Dorsolateral prefrontal cortex (tissue), 120 donors: ENCODE measurements at regions of chr12 and their contacts with region 1.

Region 1: GRCh38 chr12:53195516-53196420 is 11.3 kb downstream of the ITGB7 start:
- DNase-seq: no peak
- H3K4me3 ChIP-seq: no peak overlapping the region
- H3K27ac ChIP-seq: no peak overlapping the region
- H3K27me3 ChIP-seq: peaks cover 0 to 11% (median 0%) of the 10 kb centered on the region in 45 donors
- CTCF ChIP-seq: no peak

Region 2: DNA sequence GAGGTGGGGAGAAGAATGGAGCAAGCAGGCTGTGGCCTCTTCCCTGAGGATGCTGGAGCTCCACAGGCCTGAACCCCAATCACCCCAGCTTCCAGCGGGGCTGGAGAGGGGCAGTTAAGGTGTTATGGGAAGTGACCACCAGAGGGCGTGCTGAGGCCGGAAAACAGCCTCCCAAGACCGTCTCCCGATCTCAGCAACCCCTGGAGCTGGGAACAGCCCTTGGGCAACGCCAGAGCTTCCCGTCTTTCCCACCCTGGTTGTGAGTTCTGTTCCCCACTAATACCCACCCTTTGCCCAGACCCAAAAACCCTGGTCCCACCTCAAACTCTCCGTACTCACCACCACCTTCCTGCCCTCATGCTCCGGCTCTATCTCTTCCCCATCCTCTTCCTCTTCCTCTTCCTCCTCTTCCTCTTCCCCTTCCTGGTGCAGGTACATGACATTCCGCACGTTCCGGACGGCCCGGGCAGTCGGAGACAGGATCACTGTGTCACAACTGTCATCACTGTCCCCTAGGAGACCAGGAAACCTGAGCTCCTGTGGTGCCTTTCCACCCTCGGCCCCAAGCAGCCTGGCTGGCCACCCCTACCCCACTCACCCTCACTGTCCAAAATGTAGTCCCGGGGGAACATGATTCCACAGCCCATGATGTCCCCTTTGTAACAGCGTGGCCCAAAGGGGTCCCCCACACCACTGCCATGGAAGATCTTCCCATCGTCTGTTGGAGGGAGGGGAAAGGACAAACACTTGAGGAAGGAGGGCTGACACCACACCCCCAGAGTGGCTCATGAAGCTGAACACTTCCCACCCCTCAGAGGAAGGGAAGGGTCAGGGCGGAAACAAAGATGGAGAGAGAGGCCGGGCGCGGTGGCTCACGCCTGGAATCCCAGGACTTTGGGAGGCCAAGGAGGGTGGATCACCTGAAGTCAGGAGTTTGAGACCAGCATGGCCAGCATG is 129.5 kb before region 1 on chr12:
- intact Hi-C with region 1: loop called (anchors 2 to 5 kb)
- DNase-seq: peak in 9 of 10 donors; percentile 61 to 83 (median 74)
- H3K4me3 ChIP-seq: no peak overlapping the region
- H3K27ac ChIP-seq: peak overlapping the region in 56 of 59 donors; percentile 4 to 97 (median 73)
- H3K27me3 ChIP-seq: no peaks in the 10 kb centered on the region
- CTCF ChIP-seq: peak; percentile 85 to 98 (median 93)

Region 3: GRCh38 chr12:53159195-53159839 is 36.5 kb before region 1 on chr12:
- intact Hi-C with region 1: loop called (anchors 2 kb)
- DNase-seq: peak; percentile 67 to 87 (median 81)
- H3K4me3 ChIP-seq: no peak overlapping the region
- H3K27ac ChIP-seq: peak overlapping the region in 1 of 59 donors; percentile 21
- H3K27me3 ChIP-seq: no peaks in the 10 kb centered on the region
- CTCF ChIP-seq: peak; percentile 42 to 98 (median 88)